ENCODE measurements at regions of chr10 and their contacts with region 1.

Region 1: DNA sequence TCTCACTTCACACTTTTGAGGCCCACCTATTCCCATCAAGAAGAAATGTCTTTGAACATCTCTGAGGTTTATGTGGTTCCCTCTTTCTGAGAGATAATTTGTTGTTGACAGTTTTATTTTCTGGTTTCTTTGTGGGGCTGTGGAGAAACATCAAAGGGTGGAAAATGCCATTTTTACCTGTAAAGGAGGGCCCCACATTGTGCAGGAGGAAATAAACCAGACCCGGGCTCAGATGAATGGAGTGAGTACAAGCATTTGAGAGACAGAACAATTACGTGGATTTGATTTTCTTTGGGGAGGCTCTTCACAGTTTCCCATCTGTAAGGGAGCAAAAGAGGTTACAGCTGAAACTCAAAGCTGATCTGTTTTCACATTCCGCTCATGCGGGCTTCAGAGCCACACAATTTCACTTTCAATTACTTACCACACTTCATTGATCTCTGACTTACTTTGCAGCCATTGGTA is 29.8 kb downstream of the ITPRIP start:
- DNase-seq: peak in 7 of 9 donors; percentile 51 to 77 (median 71)
- ATAC-seq: peak; percentile 58
- H3K4me3 ChIP-seq: peak overlapping the region; percentile 19
- H3K4me3 Mint-ChIP-seq: peak overlapping the region; percentile 25 to 83 (median 75)
- H3K27ac ChIP-seq: no peak overlapping the region
- H3K27ac Mint-ChIP-seq: peak overlapping the region; percentile 79 to 94 (median 87)
- H3K4me1 ChIP-seq: peaks cover 39 to 43% of the 10 kb centered on the region in 2 donors
- H3K4me1 Mint-ChIP-seq: peaks cover 53 to 89% (median 75%) of the 10 kb centered on the region in 7 donors
- H3K27me3 ChIP-seq: no peaks in the 10 kb centered on the region
- H3K27me3 Mint-ChIP-seq: no peaks in the 10 kb centered on the region

Region 2: GRCh38 chr10:104274762-104275721 is 33.4 kb before region 1 on chr10:
- CTCF ChIA-PET with region 1: interaction called, 16 read pairs
- POLR2A ChIA-PET with region 1: no interaction called
- intact Hi-C with region 1: no loop called
- DNase-seq: peak in 6 of 9 donors; percentile 35 to 60 (median 44)
- ATAC-seq: peak; percentile 90
- H3K4me3 ChIP-seq: peak overlapping the region; percentile 44
- H3K4me3 Mint-ChIP-seq: peak overlapping the region in 8 of 10 donors; percentile 18 to 70 (median 40)
- H3K27ac ChIP-seq: no peak overlapping the region
- H3K27ac Mint-ChIP-seq: no peak overlapping the region
- H3K4me1 ChIP-seq: peaks cover 3 to 7% of the 10 kb centered on the region in 2 donors
- H3K4me1 Mint-ChIP-seq: peaks cover 0 to 5% (median 0%) of the 10 kb centered on the region in 7 donors
- H3K27me3 ChIP-seq: no peaks in the 10 kb centered on the region
- H3K27me3 Mint-ChIP-seq: peaks cover 0 to 22% (median 4%) of the 10 kb centered on the region in 5 donors

Region 3: DNA sequence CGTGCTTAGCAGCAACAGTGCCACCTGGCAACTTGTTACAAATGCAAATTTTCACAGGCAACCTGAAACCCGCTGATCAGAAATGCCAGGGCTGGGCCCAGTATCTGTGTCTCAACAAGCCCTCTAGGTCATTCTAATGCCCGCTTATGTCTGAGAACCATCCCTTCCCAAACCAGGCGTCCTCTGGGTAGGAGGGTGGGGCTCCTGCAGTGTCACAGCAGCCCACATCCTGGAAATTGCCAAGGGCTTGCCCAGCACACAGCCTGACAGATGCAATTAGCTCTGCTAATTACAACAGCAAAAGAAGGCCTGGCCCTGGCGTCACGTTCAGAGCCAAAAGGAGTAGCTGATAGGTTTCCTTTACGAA is 13.9 kb after region 1 on chr10:
- CTCF ChIA-PET with region 1: interaction called, 49 read pairs
- POLR2A ChIA-PET with region 1: interaction called, 44 read pairs
- intact Hi-C with region 1: loop called (anchors 1 kb)
- DNase-seq: no peak
- ATAC-seq: peak; percentile 44
- H3K4me3 ChIP-seq: peak overlapping the region; percentile 38
- H3K4me3 Mint-ChIP-seq: peak overlapping the region; percentile 72 to 93 (median 82)
- H3K27ac ChIP-seq: peak overlapping the region; percentile 59
- H3K27ac Mint-ChIP-seq: peak overlapping the region; percentile 89 to 96 (median 94)
- H3K4me1 ChIP-seq: peaks cover 54 to 97% of the 10 kb centered on the region in 2 donors
- H3K4me1 Mint-ChIP-seq: peaks cover 83 to 100% (median 99%) of the 10 kb centered on the region in 7 donors
- H3K27me3 ChIP-seq: no peaks in the 10 kb centered on the region
- H3K27me3 Mint-ChIP-seq: no peaks in the 10 kb centered on the region

Region 4: DNA sequence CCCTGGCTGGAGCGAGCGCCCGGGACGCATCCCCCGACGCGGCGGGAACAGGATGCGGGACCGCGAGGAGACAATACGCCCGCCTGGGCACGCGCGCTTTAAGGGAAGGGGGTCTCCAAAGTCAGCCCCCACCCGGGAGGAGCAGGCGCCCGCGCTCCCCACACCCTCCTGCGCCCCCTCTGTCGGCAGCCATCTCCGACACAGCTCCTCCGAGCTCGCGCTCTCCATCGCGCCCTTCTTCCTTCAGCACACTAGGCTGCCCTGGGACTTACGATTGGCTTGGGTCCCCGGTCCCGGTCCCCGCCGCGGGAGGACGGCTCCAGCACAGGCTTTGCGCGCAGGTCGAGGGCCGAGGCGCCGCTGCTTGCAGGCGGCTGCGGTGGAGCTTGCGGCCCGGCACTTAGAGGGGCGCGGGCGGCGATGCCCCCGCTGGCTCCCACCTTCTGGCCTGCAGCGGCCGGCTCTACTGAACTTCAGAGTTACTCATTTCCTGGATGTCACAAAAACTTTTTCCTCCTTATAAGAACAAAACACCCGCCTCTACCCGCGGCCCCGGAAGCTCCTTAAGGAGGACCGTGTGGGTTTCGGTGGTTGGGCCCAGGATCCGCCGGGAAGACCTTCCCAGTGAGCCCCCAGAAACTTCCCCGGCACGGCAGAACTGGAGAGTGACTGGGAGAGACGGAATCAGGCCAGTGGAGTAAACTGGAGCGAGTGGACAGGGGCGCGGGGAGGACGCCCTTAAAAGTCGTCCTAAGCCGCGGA is 29.7 kb after region 1 on chr10 and contains the start of gene ITPRIP:
- CTCF ChIA-PET with region 1: interaction called, 58 read pairs
- POLR2A ChIA-PET with region 1: interaction called, 78 read pairs
- intact Hi-C with region 1: loop called (anchors 1 kb)
- DNase-seq: peak; percentile 60 to 89 (median 88)
- ATAC-seq: peak; percentile 86
- H3K4me3 ChIP-seq: peak within 1 kb of the TSS; percentile 85
- H3K4me3 Mint-ChIP-seq: peak within 1 kb of the TSS; percentile 88 to 100 (median 98)
- H3K27ac ChIP-seq: peak within 1 kb of the TSS; percentile 94
- H3K27ac Mint-ChIP-seq: peak within 1 kb of the TSS; percentile 87 to 100 (median 99)
- H3K4me1 ChIP-seq: peaks cover 22 to 34% of the 10 kb centered on the region in 2 donors
- H3K4me1 Mint-ChIP-seq: peaks cover 34 to 58% (median 49%) of the 10 kb centered on the region in 7 donors
- H3K27me3 ChIP-seq: no peaks in the 10 kb centered on the region
- H3K27me3 Mint-ChIP-seq: peaks cover 0 to 10% (median 0%) of the 10 kb centered on the region in 5 donors
- total RNA-seq, gene ITPRIP: 20.0 to 129 (median 27.8) TPM

Region 5: GRCh38 chr10:104353325-104354048 is 45.0 kb after region 1 on chr10 and contains the start of gene CFAP58:
- CTCF ChIA-PET with region 1: interaction called, 259 read pairs
- POLR2A ChIA-PET with region 1: interaction called, 11 read pairs
- intact Hi-C with region 1: loop called (anchors 1 kb)
- DNase-seq: peak; percentile 82 to 90 (median 87)
- ATAC-seq: peak; percentile 88
- H3K4me3 ChIP-seq: peak within 1 kb of the TSS; percentile 54
- H3K4me3 Mint-ChIP-seq: peak within 1 kb of the TSS in 6 of 10 donors; percentile 4 to 67 (median 10)
- H3K27ac ChIP-seq: no peak within 1 kb of the TSS
- H3K27ac Mint-ChIP-seq: peak within 1 kb of the TSS in 2 of 9 donors; percentile 14 to 61
- H3K4me1 ChIP-seq: peaks cover 11% of the 10 kb centered on the region in 2 donors
- H3K4me1 Mint-ChIP-seq: peaks cover 0 to 20% (median 6%) of the 10 kb centered on the region in 7 donors
- H3K27me3 ChIP-seq: no peaks in the 10 kb centered on the region
- H3K27me3 Mint-ChIP-seq: no peaks in the 10 kb centered on the region
- total RNA-seq, gene CFAP58: 0.17 TPM in 1 of 5 experiments, not detected in the others